Activated naive CD4-positive, alpha-beta T cell treated with anti-CD3 and anti-CD28 coated beads for 36 hours (primary cell): ENCODE measurements at regions of chr5 and their contacts with region 1.

Region 1: DNA sequence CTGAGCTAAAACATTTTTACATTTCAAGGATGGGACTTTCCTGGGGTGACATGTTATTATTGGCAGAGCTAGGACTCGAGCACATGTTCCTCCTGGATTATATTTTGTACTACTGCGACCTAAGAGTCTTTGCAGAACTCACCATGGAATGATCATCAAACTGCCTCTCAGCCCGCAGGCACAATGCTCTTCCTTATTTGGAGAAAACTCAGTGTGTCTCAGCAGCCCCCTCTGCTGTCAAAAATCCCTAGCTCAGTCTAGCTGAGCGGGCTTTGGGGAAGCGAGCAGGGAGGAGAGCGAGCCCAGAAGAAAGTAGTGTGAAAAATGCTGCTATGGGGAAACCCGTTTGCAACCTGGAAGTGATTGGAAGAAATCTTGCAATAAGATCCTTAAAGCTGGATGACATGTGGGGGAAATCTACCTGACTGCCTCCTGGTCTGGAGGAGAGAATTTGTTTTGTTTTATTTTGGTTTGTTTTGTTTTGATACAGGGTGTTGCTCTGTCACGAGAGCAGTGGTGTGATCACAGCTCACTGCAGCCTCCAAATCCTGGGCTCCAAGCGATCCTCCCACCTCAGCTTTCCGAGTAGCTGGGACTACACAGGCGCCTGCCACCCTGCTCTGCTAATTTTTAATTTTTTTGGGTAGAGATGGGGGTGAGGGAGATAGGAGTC is 89.9 kb upstream of the CLINT1 start:
- DNase-seq: peak; percentile 91
- H3K4me3 Mint-ChIP-seq: no peak overlapping the region
- H3K27ac Mint-ChIP-seq: no peak overlapping the region
- H3K4me1 Mint-ChIP-seq: peaks cover 4% of the 10 kb centered on the region
- H3K27me3 Mint-ChIP-seq: peaks cover 4% of the 10 kb centered on the region

Region 2: GRCh38 chr5:157761690-157762621 is 186.9 kb before region 1 on chr5:
- CTCF ChIA-PET with region 1: interaction called, 9 read pairs
- intact Hi-C with region 1: loop called (anchors 1 kb)
- DNase-seq: peak; percentile 35
- H3K4me3 Mint-ChIP-seq: no peak overlapping the region
- H3K27ac Mint-ChIP-seq: no peak overlapping the region
- H3K4me1 Mint-ChIP-seq: peaks cover 7% of the 10 kb centered on the region
- H3K27me3 Mint-ChIP-seq: no peaks in the 10 kb centered on the region

Region 3: DNA sequence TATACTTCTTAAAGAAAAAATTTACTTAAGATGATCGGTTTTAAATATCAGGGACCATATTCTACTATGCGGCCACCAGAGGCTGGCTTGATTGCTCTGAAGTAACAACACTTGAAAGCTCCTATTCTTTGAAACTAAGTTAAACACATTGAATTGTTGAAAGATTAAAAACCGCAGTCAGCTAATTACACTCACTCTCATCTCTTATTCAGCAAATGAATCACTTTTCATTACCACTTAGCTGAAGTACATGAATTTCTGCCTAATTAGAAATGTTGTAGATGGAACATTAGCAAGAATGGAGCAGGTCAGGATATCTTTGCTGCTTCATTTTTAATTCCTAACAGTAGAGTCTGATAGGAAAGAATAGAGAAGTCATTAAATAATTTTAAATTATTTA is 163.1 kb before region 1 on chr5:
- CTCF ChIA-PET with region 1: no interaction called
- intact Hi-C with region 1: no loop called
- DNase-seq: no peak
- H3K4me3 Mint-ChIP-seq: no peak overlapping the region
- H3K27ac Mint-ChIP-seq: no peak overlapping the region
- H3K4me1 Mint-ChIP-seq: no peaks in the 10 kb centered on the region
- H3K27me3 Mint-ChIP-seq: no peaks in the 10 kb centered on the region

Region 4: DNA sequence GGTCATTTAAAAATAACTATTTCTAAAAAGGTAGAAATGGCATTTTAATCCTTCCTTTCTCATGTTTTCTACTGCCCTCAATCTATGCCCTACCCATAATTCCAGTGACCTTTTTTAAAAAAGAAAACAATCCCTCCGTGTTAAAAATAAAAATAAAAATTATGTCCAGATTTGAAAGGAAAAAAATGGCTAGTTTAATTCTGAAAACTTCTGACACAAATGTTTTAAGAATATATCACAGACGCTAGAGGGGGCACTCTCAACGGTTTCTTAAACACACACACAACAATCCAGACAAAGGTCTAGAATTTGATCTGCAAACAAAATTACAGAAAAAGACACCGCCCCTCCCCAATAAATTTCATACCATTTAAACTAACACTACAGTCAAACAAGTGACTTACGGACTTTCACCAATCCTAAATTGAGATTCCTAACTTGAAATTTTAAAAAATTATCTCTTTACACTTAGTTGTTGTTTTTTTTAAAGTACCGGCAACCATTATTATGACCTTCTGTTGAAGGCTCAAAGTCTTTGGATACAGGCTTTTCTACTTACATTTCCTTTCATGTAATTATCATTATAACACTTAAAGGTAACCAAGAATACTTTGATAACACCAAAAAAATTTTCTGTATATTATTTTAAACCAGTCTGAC is 128.2 kb before region 1 on chr5:
- CTCF ChIA-PET with region 1: interaction called, 75 read pairs
- intact Hi-C with region 1: loop called (anchors 1 kb)
- DNase-seq: peak; percentile 50
- H3K4me3 Mint-ChIP-seq: no peak overlapping the region
- H3K27ac Mint-ChIP-seq: no peak overlapping the region
- H3K4me1 Mint-ChIP-seq: peaks cover 30% of the 10 kb centered on the region
- H3K27me3 Mint-ChIP-seq: no peaks in the 10 kb centered on the region

Region 5: DNA sequence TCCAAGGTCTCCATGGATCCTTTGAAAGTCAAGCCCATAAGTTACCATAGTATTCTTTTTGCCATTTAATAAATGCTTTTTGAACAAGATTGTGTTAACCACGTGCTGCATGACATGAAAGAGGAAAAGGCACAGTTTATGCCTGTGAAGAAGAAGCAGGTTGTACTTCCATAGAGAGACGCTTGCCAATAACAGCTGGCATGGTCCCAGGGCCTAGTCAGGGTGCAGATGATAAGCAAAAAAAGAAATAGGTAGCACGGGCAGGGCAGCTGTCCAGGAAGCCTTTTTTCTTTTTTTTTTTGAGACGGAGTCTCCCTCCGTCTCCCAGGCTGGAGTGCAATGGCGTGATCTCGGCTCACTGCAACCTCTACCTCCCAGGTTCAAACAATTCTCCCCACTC is 18.2 kb before region 1 on chr5:
- CTCF ChIA-PET with region 1: interaction called, 10 read pairs
- intact Hi-C with region 1: no loop called
- DNase-seq: no peak
- H3K4me3 Mint-ChIP-seq: no peak overlapping the region
- H3K27ac Mint-ChIP-seq: no peak overlapping the region
- H3K4me1 Mint-ChIP-seq: no peaks in the 10 kb centered on the region
- H3K27me3 Mint-ChIP-seq: no peaks in the 10 kb centered on the region